ENCODE measurements at regions of chr12 and their contacts with region 1.

Region 1: DNA sequence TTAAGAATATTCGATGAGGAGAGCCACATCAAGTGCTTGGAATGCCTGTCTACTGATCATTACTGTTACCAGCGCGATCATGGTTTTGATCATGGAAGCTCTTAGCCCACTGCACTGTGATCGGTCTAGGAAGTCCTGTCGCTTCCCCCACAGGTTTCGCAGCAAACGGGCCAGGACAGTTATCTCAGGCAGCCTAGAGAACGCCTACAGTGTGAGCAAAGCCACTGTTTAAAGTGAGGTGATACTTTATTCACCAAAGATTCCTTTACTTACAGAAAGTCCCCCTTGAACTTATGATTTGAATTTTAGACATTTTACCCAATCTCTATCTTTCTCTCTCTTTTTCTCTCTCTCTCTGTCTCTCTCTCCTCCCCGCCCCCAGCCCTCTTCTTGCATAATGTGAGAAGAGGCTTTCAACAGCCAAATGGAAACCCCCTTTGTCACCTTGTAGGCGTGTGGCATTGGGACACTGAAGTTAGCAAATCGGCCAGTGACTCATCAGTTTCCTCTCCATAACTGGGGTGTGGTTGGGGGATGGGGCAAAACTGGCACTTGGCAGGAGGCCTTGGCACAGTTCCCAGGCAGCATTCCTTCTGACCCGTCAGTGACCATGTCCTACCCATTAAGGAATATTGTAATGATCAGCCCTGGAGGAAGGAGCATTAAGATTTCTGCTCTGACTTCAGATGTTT is 214.8 kb downstream of the CHST11 start:
- DNase-seq: peak; percentile 98
- H3K4me3 Mint-ChIP-seq: peak overlapping the region; percentile 42
- H3K27ac Mint-ChIP-seq: peak overlapping the region; percentile 97
- H3K4me1 Mint-ChIP-seq: peaks cover 46% of the 10 kb centered on the region
- H3K27me3 Mint-ChIP-seq: no peaks in the 10 kb centered on the region

Region 2: DNA sequence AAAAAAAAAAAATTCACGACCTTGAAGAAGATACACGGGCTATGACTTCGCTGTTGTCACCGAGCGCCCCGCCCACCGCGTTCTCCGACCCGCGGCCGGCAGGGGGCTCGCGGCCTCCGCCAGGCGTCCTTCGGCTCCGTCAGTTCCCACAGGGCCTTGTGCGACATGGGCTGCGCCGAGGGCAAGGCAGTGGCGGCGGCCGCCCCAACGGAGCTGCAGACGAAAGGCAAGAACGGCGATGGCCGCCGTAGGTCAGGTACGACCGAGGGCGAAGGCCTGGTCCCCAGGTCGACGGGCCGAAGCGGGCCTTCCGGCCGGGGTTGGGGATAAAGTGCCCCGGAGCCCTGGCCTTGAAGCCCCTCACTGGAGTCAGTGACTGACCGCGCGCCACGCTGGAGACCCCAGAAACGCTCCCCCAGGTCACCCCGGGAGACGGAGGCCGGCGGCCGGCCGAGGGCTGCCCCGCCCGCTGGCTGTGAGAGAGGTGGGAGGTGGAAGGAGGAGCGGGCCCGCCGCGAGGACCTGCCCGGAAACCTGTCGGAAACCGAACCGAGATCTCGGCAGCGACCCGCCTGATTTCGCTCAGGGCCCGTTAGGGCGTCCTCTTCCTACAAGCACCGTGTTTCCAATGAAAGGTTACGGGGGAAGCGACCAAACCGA is 455.8 kb before region 1 on chr12 and contains the start of gene TXNRD1:
- CTCF ChIA-PET with region 1: no interaction called
- intact Hi-C with region 1: loop called (anchors 5 kb)
- DNase-seq: peak; percentile 88
- H3K4me3 Mint-ChIP-seq: peak within 1 kb of the TSS; percentile 65
- H3K27ac Mint-ChIP-seq: no peak within 1 kb of the TSS
- H3K4me1 Mint-ChIP-seq: peaks cover 39% of the 10 kb centered on the region
- H3K27me3 Mint-ChIP-seq: no peaks in the 10 kb centered on the region
- total RNA-seq, gene TXNRD1: 86.0 to 86.9 TPM

Region 3: GRCh38 chr12:104462931-104463339 is 208.6 kb before region 1 on chr12:
- CTCF ChIA-PET with region 1: interaction called, 9 read pairs
- intact Hi-C with region 1: loop called (anchors 1 kb)
- DNase-seq: peak; percentile 65
- H3K4me3 Mint-ChIP-seq: peak overlapping the region; percentile 49
- H3K27ac Mint-ChIP-seq: peak overlapping the region; percentile 84
- H3K4me1 Mint-ChIP-seq: peaks cover 75% of the 10 kb centered on the region
- H3K27me3 Mint-ChIP-seq: no peaks in the 10 kb centered on the region

Region 4: DNA sequence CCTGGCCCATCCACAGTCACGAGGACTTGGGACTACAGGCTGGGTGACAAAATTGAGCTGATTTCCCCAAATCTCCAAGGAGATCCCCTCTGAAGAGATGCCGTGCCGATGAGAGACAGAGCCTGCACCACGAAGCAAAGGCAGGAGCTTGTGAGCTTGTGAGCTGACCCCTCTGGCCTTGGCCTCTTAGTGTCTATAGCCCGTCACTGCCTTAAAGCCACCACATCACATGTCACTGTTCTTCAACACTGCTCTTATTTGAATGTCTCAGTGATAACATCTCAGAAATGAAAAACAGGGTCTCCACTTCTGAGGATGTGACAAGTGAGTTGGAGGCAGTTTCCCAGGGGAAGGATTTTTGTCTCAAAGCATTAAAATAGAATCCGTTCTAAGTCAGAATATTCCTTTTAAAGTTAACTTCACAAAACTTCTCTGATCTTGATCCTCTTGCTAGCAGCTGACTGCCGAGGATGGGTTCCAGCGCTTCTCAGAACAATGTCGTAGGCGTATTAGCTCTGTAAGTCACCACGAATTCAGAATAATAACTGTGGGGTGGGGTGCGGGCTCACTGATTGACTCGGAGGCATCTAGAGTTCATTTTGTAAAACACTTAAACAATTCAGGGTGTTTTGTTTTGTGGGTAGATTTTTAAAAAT is 177.3 kb before region 1 on chr12:
- CTCF ChIA-PET with region 1: interaction called, 3 read pairs
- intact Hi-C with region 1: loop called (anchors 1 kb)
- DNase-seq: peak; percentile 85
- H3K4me3 Mint-ChIP-seq: peak overlapping the region; percentile 52
- H3K27ac Mint-ChIP-seq: peak overlapping the region; percentile 70
- H3K4me1 Mint-ChIP-seq: peaks cover 82% of the 10 kb centered on the region
- H3K27me3 Mint-ChIP-seq: no peaks in the 10 kb centered on the region

Region 5: GRCh38 chr12:104604070-104604994 is 67.2 kb before region 1 on chr12:
- CTCF ChIA-PET with region 1: no interaction called
- intact Hi-C with region 1: loop called (anchors 2 kb)
- DNase-seq: peak; percentile 60
- H3K4me3 Mint-ChIP-seq: no peak overlapping the region
- H3K27ac Mint-ChIP-seq: peak overlapping the region; percentile 58
- H3K4me1 Mint-ChIP-seq: peaks cover 27% of the 10 kb centered on the region
- H3K27me3 Mint-ChIP-seq: no peaks in the 10 kb centered on the region

Region 6: GRCh38 chr12:104720339-104721038 is 48.9 kb after region 1 on chr12:
- CTCF ChIA-PET with region 1: no interaction called
- intact Hi-C with region 1: loop called (anchors 2 kb)
- DNase-seq: peak; percentile 81
- H3K4me3 Mint-ChIP-seq: peak overlapping the region; percentile 70
- H3K27ac Mint-ChIP-seq: peak overlapping the region; percentile 79
- H3K4me1 Mint-ChIP-seq: peaks cover 35% of the 10 kb centered on the region
- H3K27me3 Mint-ChIP-seq: no peaks in the 10 kb centered on the region

Region 7: GRCh38 chr12:104958009-104958945 is 286.7 kb after region 1 on chr12 and contains the start of gene SLC41A2:
- CTCF ChIA-PET with region 1: no interaction called
- intact Hi-C with region 1: loop called (anchors 1 kb)
- DNase-seq: peak; percentile 85
- H3K4me3 Mint-ChIP-seq: peak within 1 kb of the TSS; percentile 84
- H3K27ac Mint-ChIP-seq: peak within 1 kb of the TSS; percentile 72
- H3K4me1 Mint-ChIP-seq: peaks cover 19% of the 10 kb centered on the region
- H3K27me3 Mint-ChIP-seq: peaks cover 14% of the 10 kb centered on the region
- total RNA-seq, gene SLC41A2: 2.7 to 3.5 TPM